ENCODE measurements at regions of chr19 and their contacts with region 1.

Region 1: DNA sequence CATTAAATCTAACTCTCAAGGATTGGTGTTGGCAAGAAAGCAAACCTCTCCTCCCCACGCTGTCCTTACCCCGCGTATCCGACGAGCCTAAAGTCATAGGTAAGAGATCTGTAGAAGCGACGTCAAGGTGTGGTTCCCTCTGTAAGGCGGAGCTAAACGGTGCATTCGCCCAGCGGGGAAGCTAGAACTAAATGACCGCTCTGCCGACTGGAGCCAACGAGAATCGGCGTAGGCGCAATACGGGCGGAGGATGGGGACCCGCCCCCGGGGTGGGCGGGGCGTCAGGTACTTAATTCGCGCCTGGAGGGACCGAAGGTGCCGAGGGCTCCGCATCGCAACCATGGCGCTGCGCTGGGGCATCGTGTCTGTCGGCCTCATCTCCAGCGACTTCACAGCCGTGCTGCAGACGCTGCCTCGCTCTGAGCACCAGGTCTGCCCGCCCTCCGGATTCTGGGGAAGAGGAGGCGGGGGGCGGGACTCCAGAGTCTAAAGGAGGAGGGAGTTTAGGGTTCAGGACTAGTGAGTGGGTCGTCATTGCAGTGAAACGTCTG is at the start of gene DHDH:
- DNase-seq: peak; percentile 90
- ATAC-seq: peak; percentile 92
- H3K4me3 Mint-ChIP-seq: peak within 1 kb of the TSS; percentile 74
- H3K27ac Mint-ChIP-seq: peak within 1 kb of the TSS; percentile 48
- H3K4me1 Mint-ChIP-seq: peaks cover 10% of the 10 kb centered on the region
- H3K27me3 Mint-ChIP-seq: peaks cover 2% of the 10 kb centered on the region
- total RNA-seq, gene DHDH: 1.4 to 2.4 TPM

Region 2: GRCh38 chr19:48608798-48609263 is 324.6 kb before region 1 on chr19:
- CTCF ChIA-PET with region 1: no interaction called
- POLR2A ChIA-PET with region 1: no interaction called
- intact Hi-C with region 1: no loop called
- DNase-seq: peak; percentile 74
- ATAC-seq: peak; percentile 86
- H3K4me3 Mint-ChIP-seq: no peak overlapping the region
- H3K27ac Mint-ChIP-seq: no peak overlapping the region
- H3K4me1 Mint-ChIP-seq: peaks cover 3% of the 10 kb centered on the region
- H3K27me3 Mint-ChIP-seq: no peaks in the 10 kb centered on the region

Region 3: DNA sequence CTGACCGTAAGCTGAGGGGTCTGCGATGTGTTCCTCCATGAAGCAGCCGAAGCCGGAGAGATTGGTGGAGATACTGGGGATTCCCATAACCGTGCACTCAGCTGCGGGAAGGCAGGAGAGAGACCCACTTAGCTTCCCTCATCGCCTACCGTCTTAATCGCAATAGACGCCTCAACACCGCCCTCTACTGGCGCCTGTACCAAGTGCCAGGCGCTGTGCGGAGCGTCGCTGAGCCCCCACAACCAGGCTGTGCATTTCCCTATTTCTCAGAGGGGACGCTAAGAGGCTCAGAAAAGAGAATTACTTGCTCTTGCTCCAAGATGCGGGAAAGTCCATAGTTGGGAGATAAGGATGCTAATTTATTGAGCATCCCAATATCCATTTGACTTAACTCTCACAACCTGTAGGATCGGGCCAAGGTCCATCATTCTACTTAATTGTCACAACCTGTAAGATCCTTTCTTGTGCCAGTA is 37.5 kb after region 1 on chr19:
- CTCF ChIA-PET with region 1: interaction called, 13 read pairs
- POLR2A ChIA-PET with region 1: no interaction called
- intact Hi-C with region 1: loop called (anchors 1 to 5 kb)
- DNase-seq: peak; percentile 91
- ATAC-seq: peak; percentile 84
- H3K4me3 Mint-ChIP-seq: no peak overlapping the region
- H3K27ac Mint-ChIP-seq: no peak overlapping the region
- H3K4me1 Mint-ChIP-seq: peaks cover 17% of the 10 kb centered on the region
- H3K27me3 Mint-ChIP-seq: no peaks in the 10 kb centered on the region

Region 4: DNA sequence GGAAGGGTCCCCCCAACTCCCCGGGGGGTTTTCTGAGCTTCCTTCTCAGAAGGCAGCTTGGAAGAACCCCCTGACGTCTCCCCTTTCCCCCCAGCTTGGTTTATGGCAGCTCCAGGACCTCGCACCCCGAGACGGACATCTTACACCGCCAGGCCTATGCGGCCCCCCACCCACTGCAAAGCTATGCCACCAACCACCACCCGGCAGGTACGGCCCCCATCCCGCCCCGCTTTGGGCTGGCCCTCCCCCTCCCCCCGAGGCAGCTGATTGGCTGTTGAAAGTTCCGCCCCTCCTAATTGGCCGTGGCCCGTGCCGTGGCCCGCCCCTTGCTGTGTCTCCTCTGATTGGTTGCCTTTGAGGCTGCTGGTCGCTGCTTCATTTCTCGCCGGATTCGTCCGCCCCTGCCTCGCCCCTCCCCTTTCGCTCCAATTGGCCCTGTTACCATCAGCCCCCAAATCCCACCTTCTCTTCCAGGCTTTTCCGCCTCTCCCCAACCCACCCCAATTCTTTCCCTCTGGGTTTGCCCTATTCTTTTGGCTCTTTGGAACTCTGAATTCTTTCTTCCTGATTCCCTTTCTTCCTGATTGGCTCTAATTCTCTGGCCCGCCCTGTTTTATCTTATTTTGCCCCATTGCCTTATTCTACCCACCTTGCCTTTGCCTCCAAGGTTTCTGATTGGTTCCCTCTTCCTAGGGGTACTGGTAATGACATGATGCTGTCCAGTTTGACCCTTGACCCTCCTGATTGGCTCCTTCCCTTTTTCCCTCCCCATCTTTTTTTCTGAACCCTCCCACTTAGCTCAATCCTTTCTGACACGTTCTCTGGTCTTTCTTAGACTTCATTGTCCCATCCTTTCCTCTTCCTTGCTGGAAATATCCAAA is 660.0 kb after region 1 on chr19:
- CTCF ChIA-PET with region 1: no interaction called
- POLR2A ChIA-PET with region 1: no interaction called
- intact Hi-C with region 1: no loop called
- DNase-seq: peak; percentile 97
- ATAC-seq: peak; percentile 60
- H3K4me3 Mint-ChIP-seq: peak overlapping the region; percentile 79
- H3K27ac Mint-ChIP-seq: peak overlapping the region; percentile 84
- H3K4me1 Mint-ChIP-seq: peaks cover 24% of the 10 kb centered on the region
- H3K27me3 Mint-ChIP-seq: no peaks in the 10 kb centered on the region